ENCODE measurements at regions of chr3 and their contacts with region 1.

Region 1: DNA sequence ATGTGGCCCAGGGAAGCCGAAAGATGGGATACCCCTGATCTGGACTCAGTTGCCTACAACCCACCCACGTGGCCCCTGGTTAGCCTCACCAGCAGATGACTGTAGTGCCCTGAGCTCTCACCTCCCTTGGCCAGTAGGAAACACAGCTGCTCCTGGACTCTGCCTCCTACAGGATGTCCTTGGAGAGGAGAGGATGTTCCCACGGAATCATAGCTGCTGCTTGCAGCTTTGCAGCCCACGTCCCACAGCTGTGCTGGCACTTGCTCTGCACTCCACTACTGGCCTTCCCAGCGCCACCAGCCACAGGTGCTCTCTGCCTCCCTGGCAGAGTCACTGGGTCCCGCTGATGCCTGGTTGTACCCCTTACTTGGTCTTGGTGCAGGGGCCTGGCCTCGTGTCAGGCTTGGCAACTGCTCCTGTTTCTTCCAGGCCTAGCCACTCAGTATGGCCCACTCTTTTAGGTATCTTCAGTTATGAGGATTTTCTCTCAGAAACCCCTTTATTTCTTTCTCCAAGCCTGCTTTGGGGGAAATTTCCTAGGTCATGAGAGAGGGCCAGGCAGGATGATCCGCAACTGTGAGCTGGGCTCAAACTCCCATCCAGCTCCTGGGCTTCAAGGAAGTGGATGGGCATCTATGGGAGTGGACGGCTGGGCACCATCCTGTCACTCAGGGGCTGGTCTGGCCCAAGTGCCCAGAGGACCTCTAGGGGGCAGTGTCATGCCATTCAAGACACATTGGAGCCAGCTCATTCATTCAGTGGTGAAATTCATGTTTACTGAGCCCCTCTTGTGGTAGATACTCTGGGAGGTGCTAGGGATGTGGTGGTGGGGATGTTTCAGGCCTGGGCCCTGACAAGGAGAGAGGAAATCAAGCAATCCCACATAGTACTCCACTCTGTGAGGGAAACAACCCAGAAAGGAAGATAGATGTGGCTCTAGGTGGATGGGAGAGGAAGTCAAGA is 16.2 kb upstream of the VILL start:
- DNase-seq: peak; percentile 42 to 84 (median 72)
- ATAC-seq: peak; percentile 99
- H3K4me3 ChIP-seq: no peak overlapping the region
- H3K4me3 Mint-ChIP-seq: no peak overlapping the region
- H3K27ac ChIP-seq: no peak overlapping the region
- H3K27ac Mint-ChIP-seq: no peak overlapping the region
- H3K4me1 ChIP-seq: peaks cover 3% of the 10 kb centered on the region
- H3K4me1 Mint-ChIP-seq: peaks cover 4% of the 10 kb centered on the region
- H3K27me3 ChIP-seq: no peaks in the 10 kb centered on the region
- H3K27me3 Mint-ChIP-seq: no peaks in the 10 kb centered on the region
- CTCF ChIP-seq: peak; percentile 82

Region 2: DNA sequence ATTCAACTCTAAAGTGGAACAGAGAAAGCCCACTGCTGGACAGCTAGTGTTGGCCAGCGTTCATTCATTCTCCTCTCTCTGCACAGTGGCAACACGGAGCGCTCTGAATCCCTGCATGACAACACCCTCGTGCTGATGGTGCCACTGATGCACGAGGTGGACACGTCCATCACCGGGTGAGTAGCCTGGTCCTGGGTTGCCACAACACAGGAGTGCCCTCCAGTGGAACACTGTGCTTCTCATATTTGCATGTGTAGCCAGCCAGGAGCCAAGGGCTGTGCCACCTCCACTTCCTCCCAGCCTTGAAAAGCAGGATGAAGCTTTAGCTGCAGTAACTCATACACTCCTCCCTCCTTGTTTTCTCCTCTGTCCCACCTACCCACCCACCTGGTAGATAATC is 232.8 kb before region 1 on chr3:
- CTCF ChIA-PET with region 1: no interaction called
- POLR2A ChIA-PET with region 1: no interaction called
- intact Hi-C with region 1: no loop called
- DNase-seq: no peak
- ATAC-seq: no peak
- H3K4me3 ChIP-seq: no peak overlapping the region
- H3K4me3 Mint-ChIP-seq: no peak overlapping the region
- H3K27ac ChIP-seq: no peak overlapping the region
- H3K27ac Mint-ChIP-seq: no peak overlapping the region
- H3K4me1 ChIP-seq: no peaks in the 10 kb centered on the region
- H3K4me1 Mint-ChIP-seq: no peaks in the 10 kb centered on the region
- H3K27me3 ChIP-seq: no peaks in the 10 kb centered on the region
- H3K27me3 Mint-ChIP-seq: peaks cover 3% of the 10 kb centered on the region
- CTCF ChIP-seq: no peak

Region 3: GRCh38 chr3:37876279-37876678 is 98.1 kb before region 1 on chr3:
- CTCF ChIA-PET with region 1: no interaction called
- POLR2A ChIA-PET with region 1: no interaction called
- intact Hi-C with region 1: no loop called
- DNase-seq: no peak
- ATAC-seq: no peak
- H3K4me3 ChIP-seq: no peak overlapping the region
- H3K4me3 Mint-ChIP-seq: no peak overlapping the region
- H3K27ac ChIP-seq: no peak overlapping the region
- H3K27ac Mint-ChIP-seq: no peak overlapping the region
- H3K4me1 ChIP-seq: no peaks in the 10 kb centered on the region
- H3K4me1 Mint-ChIP-seq: no peaks in the 10 kb centered on the region
- H3K27me3 ChIP-seq: no peaks in the 10 kb centered on the region
- H3K27me3 Mint-ChIP-seq: peaks cover 3% of the 10 kb centered on the region
- CTCF ChIP-seq: no peak

Region 4: DNA sequence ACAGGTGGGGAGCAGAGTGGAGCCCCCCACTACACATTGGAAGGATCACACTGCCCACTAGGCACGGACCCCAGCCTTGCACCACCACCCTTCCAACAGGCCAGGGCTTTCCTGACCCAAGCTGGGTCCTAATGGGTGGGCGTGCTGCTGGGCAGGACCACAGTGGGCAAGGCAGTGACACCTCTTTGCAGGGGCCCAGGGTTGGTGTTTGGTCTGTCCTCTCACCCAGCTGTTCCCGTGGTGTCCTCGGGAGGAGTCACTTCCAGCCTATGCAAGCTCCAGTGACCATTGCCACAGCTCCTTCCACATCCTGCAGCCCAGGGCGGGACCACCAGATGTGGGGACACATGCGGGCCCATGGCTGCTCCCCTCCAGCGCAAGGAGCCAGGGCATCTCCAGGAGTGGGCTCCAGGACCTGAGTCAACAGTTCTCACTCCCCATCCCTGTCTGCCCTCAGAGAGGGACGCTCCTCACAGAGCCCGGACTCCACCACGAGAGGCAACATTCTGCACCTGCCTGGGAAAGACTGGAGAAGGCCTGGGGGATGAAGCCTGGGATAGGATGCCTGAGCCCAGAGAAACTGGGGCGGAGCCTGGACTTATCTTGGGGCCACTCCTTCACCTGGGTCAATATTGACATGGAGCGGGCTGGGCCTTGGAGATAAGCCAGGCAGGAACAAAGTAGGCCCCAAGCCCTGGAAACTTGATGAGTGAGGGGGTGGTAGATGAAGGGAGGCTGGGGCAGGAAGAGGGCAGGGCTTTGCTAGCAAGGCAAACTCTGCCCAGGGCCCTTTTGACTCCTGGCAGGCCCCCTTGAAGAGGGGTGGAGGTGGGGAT is 12.3 kb after region 1 on chr3:
- CTCF ChIA-PET with region 1: interaction called, 15 read pairs
- POLR2A ChIA-PET with region 1: no interaction called
- intact Hi-C with region 1: no loop called
- DNase-seq: no peak
- ATAC-seq: no peak
- H3K4me3 ChIP-seq: no peak overlapping the region
- H3K4me3 Mint-ChIP-seq: no peak overlapping the region
- H3K27ac ChIP-seq: no peak overlapping the region
- H3K27ac Mint-ChIP-seq: no peak overlapping the region
- H3K4me1 ChIP-seq: no peaks in the 10 kb centered on the region
- H3K4me1 Mint-ChIP-seq: no peaks in the 10 kb centered on the region
- H3K27me3 ChIP-seq: no peaks in the 10 kb centered on the region
- H3K27me3 Mint-ChIP-seq: no peaks in the 10 kb centered on the region
- CTCF ChIP-seq: no peak

Region 5: GRCh38 chr3:37993820-37994638 is 19.6 kb after region 1 on chr3:
- CTCF ChIA-PET with region 1: interaction called, 11 read pairs
- POLR2A ChIA-PET with region 1: no interaction called
- intact Hi-C with region 1: loop called in 1 of 2 experiments (anchors 2 kb)
- DNase-seq: peak in 8 of 9 experiments; percentile 45 to 79 (median 58)
- ATAC-seq: peak; percentile 39
- H3K4me3 ChIP-seq: peak overlapping the region; percentile 78 to 80
- H3K4me3 Mint-ChIP-seq: peak overlapping the region; percentile 95
- H3K27ac ChIP-seq: peak overlapping the region; percentile 66 to 88
- H3K27ac Mint-ChIP-seq: peak overlapping the region; percentile 96
- H3K4me1 ChIP-seq: peaks cover 57% of the 10 kb centered on the region
- H3K4me1 Mint-ChIP-seq: peaks cover 55% of the 10 kb centered on the region
- H3K27me3 ChIP-seq: no peaks in the 10 kb centered on the region
- H3K27me3 Mint-ChIP-seq: no peaks in the 10 kb centered on the region
- CTCF ChIP-seq: no peak

Region 6: DNA sequence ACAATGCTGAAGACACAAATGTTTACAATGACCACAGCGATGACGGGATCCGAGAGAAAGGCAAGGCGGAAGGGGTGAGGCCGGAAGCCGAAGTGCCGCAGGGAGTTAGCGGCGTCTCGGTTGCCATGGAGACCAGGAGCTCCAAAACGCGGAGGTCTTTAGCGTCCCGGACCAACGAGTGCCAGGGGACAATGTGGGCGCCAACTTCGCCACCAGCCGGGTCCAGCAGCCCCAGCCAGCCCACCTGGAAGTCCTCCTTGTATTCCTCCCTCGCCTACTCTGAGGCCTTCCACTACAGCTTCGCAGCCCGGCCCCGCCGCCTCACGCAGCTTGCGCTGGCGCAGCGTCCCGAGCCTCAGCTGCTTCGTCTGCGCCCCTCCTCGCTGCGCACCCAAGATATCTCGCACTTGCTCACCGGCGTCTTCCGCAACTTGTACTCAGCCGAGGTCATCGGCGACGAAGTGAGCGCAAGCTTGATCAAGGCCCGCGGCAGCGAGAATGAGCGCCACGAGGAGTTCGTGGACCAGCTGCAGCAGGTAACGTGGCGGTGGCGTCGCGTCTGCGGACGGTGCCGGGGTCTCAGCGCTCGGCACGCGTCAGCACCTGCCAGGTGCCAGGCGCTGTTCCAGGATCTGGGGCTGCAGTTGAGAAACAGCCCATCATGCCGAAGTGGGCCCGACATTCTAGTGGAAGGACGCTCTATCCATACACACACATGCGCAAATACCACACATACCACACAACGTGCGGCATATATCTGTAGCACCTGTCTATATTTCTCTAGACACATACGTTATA is 64.9 kb after region 1 on chr3 and contains the start of gene DLEC1:
- CTCF ChIA-PET with region 1: interaction called, 14 read pairs
- POLR2A ChIA-PET with region 1: no interaction called
- intact Hi-C with region 1: loop called in 1 of 2 experiments (anchors 1 kb)
- DNase-seq: peak; percentile 61 to 95 (median 86)
- ATAC-seq: peak; percentile 61
- H3K4me3 ChIP-seq: peak within 1 kb of the TSS; percentile 65 to 67
- H3K4me3 Mint-ChIP-seq: peak within 1 kb of the TSS; percentile 83
- H3K27ac ChIP-seq: peak within 1 kb of the TSS; percentile 62 to 90
- H3K27ac Mint-ChIP-seq: peak within 1 kb of the TSS; percentile 96
- H3K4me1 ChIP-seq: peaks cover 25% of the 10 kb centered on the region
- H3K4me1 Mint-ChIP-seq: peaks cover 27% of the 10 kb centered on the region
- H3K27me3 ChIP-seq: no peaks in the 10 kb centered on the region
- H3K27me3 Mint-ChIP-seq: no peaks in the 10 kb centered on the region
- CTCF ChIP-seq: no peak
- total RNA-seq, gene DLEC1: 1.8 to 1.9 TPM

Region 7: GRCh38 chr3:38730281-38730680 is 755.9 kb after region 1 on chr3:
- CTCF ChIA-PET with region 1: no interaction called
- POLR2A ChIA-PET with region 1: no interaction called
- intact Hi-C with region 1: no loop called
- DNase-seq: no peak
- ATAC-seq: no peak
- H3K4me3 ChIP-seq: no peak overlapping the region
- H3K4me3 Mint-ChIP-seq: no peak overlapping the region
- H3K27ac ChIP-seq: no peak overlapping the region
- H3K27ac Mint-ChIP-seq: no peak overlapping the region
- H3K4me1 ChIP-seq: no peaks in the 10 kb centered on the region
- H3K4me1 Mint-ChIP-seq: no peaks in the 10 kb centered on the region
- H3K27me3 ChIP-seq: no peaks in the 10 kb centered on the region
- H3K27me3 Mint-ChIP-seq: peaks cover 7% of the 10 kb centered on the region
- CTCF ChIP-seq: no peak

Measured in CD8-positive, alpha-beta T cell (primary cell).